PC-9 (cell line): ENCODE measurements at regions of chr20 and their contacts with region 1.

Region 1: DNA sequence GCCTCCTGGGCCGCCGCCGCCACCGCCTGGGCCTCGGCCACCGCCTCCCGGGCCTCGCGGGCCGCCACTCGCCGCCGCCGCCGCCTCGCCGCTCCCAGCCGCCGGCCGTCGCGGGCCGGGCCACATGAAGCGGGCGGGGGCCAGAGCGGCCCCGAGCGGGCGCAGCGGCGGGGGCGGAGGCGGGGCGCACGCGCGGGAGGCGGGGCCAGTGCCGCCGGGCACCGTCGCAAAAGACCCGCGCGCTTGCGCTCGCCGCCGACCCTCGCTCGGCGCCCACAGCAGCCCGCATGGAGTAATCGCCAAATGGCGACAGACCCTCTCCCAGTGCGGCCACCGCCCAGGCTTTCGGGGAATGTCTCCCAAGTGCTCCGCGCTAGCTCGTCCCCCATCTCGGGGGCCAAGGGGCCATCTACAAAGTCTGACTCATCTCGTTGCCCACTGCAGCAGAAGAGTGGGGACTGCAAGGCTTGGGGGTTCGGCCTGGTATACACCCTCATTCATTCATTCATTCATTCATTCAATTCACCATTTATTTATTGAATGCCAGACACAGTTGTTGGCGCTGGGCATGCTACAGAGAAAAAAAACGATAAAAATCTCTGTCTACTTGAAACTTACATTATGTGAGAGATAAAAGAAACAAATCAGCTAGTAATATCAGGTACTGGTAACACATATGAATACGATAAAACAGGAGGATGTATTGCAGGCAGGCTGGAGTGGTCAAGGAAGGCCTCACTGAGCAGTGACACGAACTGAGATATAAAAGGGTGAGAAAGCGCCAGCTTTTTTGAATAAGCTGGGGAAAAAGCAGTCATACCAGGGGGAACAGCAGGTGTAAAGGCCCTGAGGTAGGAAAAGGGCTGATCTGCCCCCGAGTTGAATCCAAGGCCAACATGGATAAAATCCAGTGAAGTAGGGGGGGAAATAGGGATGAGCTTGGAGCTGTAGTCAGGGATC is at the start of gene B4GALT5:
- DNase-seq: peak in 1 of 2 experiments; percentile 80
- H3K4me3 ChIP-seq: peak within 1 kb of the TSS; percentile 86
- H3K27ac ChIP-seq: peak within 1 kb of the TSS; percentile 84
- H3K4me1 ChIP-seq: peaks cover 62% of the 10 kb centered on the region
- H3K27me3 ChIP-seq: no peaks in the 10 kb centered on the region
- CTCF ChIP-seq: no peak
- total RNA-seq, gene B4GALT5: 61.7 and 63.1 TPM in 2 replicates

Region 2: DNA sequence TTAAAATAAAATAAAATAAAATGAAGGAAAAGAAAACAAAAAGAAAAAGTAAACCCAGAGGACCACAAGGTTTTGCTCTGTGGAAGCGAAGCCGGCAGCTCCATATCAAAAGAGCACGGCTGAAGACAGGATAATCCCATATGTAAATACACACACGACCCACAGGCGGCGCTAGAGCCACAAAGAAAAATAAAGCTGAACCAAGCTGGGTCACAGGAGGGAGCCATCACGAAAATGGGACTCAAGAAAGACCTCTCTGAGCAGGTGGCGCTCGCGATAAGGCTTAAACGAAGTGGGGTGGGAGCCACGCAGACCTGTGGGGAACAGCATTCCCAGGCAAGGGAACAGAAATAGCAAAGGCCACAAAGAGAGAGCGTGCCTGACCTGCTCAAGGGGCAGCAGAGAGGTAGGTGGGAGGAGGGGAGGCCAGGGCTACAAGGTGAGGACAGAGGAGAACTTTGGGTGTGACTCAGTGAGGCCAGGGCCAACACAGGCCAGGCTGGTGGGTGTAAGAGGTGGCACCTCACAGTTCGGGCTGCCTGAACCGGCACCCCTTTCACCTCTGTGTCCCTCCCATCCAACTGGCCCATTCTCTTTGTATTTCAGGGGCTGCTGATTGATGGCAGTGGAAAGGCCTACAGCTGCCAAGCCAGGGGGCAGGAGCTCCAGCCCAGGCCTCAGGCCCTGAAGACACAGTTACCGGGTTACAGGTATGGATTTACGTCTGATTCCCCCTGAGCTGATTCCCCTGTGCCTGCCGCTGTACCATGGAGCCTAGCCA is 172.1 kb before region 1 on chr20:
- CTCF ChIA-PET with region 1: no interaction called
- POLR2A ChIA-PET with region 1: interaction called, 16 read pairs
- intact Hi-C with region 1: no loop called
- DNase-seq: peak; percentile 74 to 81
- H3K4me3 ChIP-seq: no peak overlapping the region
- H3K27ac ChIP-seq: peak overlapping the region; percentile 41
- H3K4me1 ChIP-seq: peaks cover 23% of the 10 kb centered on the region
- H3K27me3 ChIP-seq: no peaks in the 10 kb centered on the region
- CTCF ChIP-seq: peak; percentile 100

Region 3: DNA sequence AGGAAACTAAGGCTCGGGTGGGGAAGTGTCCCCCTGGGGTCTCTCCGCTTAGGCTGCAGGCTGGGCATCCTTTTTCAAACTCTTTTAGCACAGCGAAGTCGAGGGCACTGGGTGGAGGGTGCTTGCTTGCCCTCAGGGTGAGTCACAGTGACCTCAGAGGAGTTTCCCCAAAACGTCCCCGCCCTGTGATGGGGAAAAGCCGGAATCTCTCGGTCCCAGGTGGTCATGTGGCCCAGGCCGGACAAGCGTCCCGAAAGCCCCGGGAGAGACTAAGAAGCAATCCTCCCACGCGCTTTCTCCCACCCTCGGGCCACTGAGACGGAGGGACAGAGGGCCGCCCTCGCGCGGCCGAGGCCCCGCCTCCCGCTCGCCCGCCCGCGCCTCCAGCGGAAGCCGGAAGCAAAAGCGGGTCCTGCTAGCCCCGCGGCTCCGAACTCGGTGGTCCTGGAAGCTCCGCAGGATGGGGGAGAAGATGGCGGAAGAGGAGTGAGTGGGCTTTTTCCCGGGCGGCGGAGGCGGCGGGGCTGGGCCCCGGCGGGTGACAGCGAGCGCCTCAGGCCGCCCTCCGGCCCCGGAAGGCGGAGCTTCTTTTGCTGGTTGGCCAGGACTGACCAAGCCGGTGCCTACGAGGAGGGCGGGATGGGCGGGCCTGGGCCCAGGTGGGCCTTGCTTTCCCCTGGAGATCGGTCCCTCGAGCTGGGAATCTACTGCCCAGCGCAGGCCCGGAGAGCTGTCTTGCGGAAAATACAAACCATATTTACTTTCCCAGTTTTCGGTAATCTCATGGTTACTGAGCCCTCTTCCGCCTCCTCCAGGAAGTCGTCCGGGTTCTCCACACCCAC is 98.7 kb after region 1 on chr20 and contains the start of gene SLC9A8:
- CTCF ChIA-PET with region 1: interaction called, 8 read pairs
- POLR2A ChIA-PET with region 1: no interaction called
- intact Hi-C with region 1: loop called (anchors 2 kb)
- DNase-seq: peak; percentile 94 to 97
- H3K4me3 ChIP-seq: peak within 1 kb of the TSS; percentile 87
- H3K27ac ChIP-seq: peak within 1 kb of the TSS; percentile 98
- H3K4me1 ChIP-seq: peaks cover 70% of the 10 kb centered on the region
- H3K27me3 ChIP-seq: no peaks in the 10 kb centered on the region
- CTCF ChIP-seq: no peak
- total RNA-seq, gene SLC9A8: 12.7 and 21.4 TPM in 2 replicates

Region 4: GRCh38 chr20:49936153-49937027 is 222.4 kb after region 1 on chr20 and contains the start of gene RNF114:
- CTCF ChIA-PET with region 1: no interaction called
- POLR2A ChIA-PET with region 1: interaction called, 13 read pairs
- intact Hi-C with region 1: no loop called
- DNase-seq: peak; percentile 73 to 85
- H3K4me3 ChIP-seq: peak within 1 kb of the TSS; percentile 92
- H3K27ac ChIP-seq: peak within 1 kb of the TSS; percentile 69
- H3K4me1 ChIP-seq: peaks cover 32% of the 10 kb centered on the region
- H3K27me3 ChIP-seq: no peaks in the 10 kb centered on the region
- CTCF ChIP-seq: 0 out of 2 replicates have a peak, but pooled peaks have one; percentile 28
- total RNA-seq, gene RNF114: 92.5 and 125 TPM in 2 replicates